ENCODE measurements at regions of chr2 and their contacts with region 1.

Region 1: DNA sequence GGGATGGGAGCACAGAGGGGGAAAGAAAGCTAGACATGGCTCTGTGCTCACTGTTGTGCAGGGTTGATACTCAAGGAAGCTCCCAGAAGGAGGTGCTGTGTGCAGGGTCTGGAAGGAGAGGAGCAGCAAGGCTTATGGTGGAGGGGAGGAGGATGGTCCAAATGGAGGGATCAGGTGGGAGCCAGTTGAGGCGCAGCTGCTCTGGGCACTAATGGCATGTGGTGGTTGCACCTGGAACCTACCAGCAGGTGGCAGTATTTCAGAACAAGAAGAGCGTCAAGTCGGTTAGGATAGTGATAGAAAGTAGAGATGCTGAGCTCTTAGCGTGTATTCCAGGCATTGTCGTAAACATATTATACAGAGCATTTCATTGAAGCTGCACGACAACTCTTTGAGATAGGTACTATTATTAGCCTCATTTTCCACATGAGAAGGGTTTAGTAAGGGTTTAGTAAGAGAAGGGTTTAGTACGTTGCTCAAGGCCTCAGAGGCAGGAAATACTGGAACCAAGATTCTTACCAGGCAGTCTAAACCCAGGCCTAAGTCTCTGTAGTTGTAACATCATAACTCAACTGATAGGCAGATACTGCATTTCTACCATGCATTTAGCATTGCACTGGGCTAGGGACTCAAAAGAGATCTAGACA is 223.7 kb downstream of the CYP26B1 start:
- DNase-seq: peak; percentile 73 to 88
- H3K4me3 ChIP-seq: no peak overlapping the region
- H3K27ac ChIP-seq: no peak overlapping the region
- H3K4me1 ChIP-seq: no peaks in the 10 kb centered on the region
- H3K27me3 ChIP-seq: no peaks in the 10 kb centered on the region
- CTCF ChIP-seq: peak in 6 of 7 experiments; percentile 59 to 90 (median 74)
- EP300 ChIP-seq: no peak
- POLR2A ChIP-seq: no peak

Region 2: DNA sequence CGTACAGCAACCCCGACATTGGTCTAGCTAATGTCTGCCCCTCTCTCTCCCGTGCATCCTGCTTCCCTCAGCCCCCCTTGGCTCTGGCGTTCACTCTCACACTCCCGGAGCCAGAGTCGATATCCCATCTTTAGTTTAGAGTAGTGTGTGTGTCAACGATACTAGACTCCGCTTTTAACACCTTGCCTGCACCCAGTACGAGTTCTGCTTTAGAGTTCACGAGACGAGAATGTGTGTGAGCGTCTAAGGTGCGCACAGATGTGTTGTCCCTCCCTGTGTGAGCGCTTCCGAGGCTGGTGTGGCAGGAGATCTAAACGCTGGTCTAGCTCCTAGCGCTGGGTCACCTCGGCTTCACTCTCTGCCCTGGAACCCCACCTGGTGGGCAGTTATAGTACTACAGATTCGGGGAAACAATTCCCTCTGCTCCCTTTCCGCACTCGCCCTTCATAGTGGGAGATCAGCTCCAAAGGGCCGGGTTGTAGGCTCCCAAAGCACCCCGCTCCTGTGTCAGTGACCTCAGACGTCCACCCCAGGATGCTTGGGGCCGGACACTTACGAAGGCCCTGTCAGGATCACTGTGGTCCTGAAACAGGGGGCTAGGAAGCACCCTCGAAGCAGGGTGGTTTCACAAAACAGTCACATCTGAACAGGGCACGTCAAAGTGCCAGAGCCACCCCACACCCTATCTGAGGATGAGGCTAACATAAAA is 226.3 kb after region 1 on chr2:
- intact Hi-C with region 1: loop called (anchors 5 kb)
- DNase-seq: peak; percentile 80 to 92
- H3K4me3 ChIP-seq: peak overlapping the region; percentile 48 to 60 (median 54)
- H3K27ac ChIP-seq: no peak overlapping the region
- H3K4me1 ChIP-seq: peaks cover 39 to 52% (median 50%) of the 10 kb centered on the region in 4 donors
- H3K27me3 ChIP-seq: peaks cover 26 to 96% (median 60%) of the 10 kb centered on the region in 3 donors
- CTCF ChIP-seq: peak in 6 of 7 experiments; percentile 62 to 92 (median 83)
- EP300 ChIP-seq: no peak
- POLR2A ChIP-seq: no peak

Region 3: GRCh38 chr2:72579591-72580180 is 655.7 kb after region 1 on chr2:
- intact Hi-C with region 1: loop called (anchors 10 kb)
- DNase-seq: peak in 1 of 2 donors; percentile 74
- H3K4me3 ChIP-seq: no peak overlapping the region
- H3K27ac ChIP-seq: no peak overlapping the region
- H3K4me1 ChIP-seq: peaks cover 0 to 8% (median 0%) of the 10 kb centered on the region in 4 donors
- H3K27me3 ChIP-seq: no peaks in the 10 kb centered on the region
- CTCF ChIP-seq: peak in 5 of 7 experiments; percentile 7 to 62 (median 51)
- EP300 ChIP-seq: no peak
- POLR2A ChIP-seq: no peak

Region 4: GRCh38 chr2:72745679-72746368 is 821.8 kb after region 1 on chr2:
- intact Hi-C with region 1: loop called (anchors 10 kb)
- DNase-seq: peak in 1 of 2 donors; percentile 86
- H3K4me3 ChIP-seq: no peak overlapping the region
- H3K27ac ChIP-seq: no peak overlapping the region
- H3K4me1 ChIP-seq: peaks cover 0 to 34% (median 3%) of the 10 kb centered on the region in 4 donors
- H3K27me3 ChIP-seq: no peaks in the 10 kb centered on the region
- CTCF ChIP-seq: peak in 5 of 7 experiments; percentile 11 to 63 (median 61)
- EP300 ChIP-seq: no peak
- POLR2A ChIP-seq: no peak

Measured in stomach (tissue), 19 donors.